Caco-2 (cell line): ENCODE measurements at regions of chr1 and their contacts with region 1.

Region 1: GRCh38 chr1:21314797-21315396 is 24.6 kb upstream of the ECE1 start:
- DNase-seq: no peak
- H3K4me3 ChIP-seq: no peak overlapping the region
- H3K4me3 Mint-ChIP-seq: no peak overlapping the region
- H3K27ac Mint-ChIP-seq: no peak overlapping the region
- H3K4me1 ChIP-seq: no peaks in the 10 kb centered on the region
- H3K4me1 Mint-ChIP-seq: peaks cover 7% of the 10 kb centered on the region
- H3K27me3 ChIP-seq: no peaks in the 10 kb centered on the region
- H3K27me3 Mint-ChIP-seq: no peaks in the 10 kb centered on the region
- CTCF ChIP-seq: no peak

Region 2: DNA sequence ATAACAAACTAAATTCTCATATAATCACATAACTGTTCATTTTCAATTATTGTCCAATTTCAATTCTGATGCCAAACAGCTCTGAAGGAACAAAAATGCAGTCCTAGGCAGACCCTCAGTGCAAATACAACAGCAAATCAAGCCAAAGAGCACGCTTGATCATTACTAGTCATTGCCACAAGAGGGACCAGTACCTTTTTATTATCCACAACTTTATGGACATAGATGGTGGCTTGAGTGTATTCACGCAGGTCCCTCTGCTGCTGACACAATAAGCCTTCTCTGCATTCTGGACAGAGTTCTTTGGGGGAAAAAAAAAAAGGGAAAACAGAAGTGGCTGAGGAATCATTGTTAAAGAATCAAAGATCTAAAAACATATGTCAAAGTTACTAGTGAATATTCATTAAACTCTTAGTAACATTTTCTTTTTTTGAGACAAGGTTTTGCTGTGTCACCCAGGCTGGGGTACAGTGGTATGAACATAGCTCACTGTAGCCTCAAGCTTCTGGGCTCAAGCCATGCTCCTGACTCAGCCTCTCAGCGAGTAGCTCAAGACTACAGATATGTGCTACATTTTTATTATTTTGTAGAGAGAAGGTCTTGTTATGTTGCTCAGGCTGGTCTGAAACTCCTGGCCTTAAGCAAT is 388.5 kb after region 1 on chr1:
- CTCF ChIA-PET with region 1: no interaction called
- POLR2A ChIA-PET with region 1: interaction called, 11 read pairs
- intact Hi-C with region 1: no loop called
- DNase-seq: peak in 1 of 2 experiments; percentile 29
- H3K4me3 ChIP-seq: no peak overlapping the region
- H3K4me3 Mint-ChIP-seq: no peak overlapping the region
- H3K27ac Mint-ChIP-seq: peak overlapping the region; percentile 3
- H3K4me1 ChIP-seq: no peaks in the 10 kb centered on the region
- H3K4me1 Mint-ChIP-seq: peaks cover 14% of the 10 kb centered on the region
- H3K27me3 ChIP-seq: no peaks in the 10 kb centered on the region
- H3K27me3 Mint-ChIP-seq: no peaks in the 10 kb centered on the region
- CTCF ChIP-seq: peak; percentile 47 to 53